ENCODE measurements at regions of chr1 and their contacts with region 1.

Region 1: GRCh38 chr1:23184212-23184934 is 15.7 kb upstream of the LUZP1 start:
- DNase-seq: peak in 4 of 5 donors; percentile 53 to 75 (median 62)
- H3K4me3 ChIP-seq: peak overlapping the region in 2 of 3 donors; percentile 40 to 66
- H3K27ac ChIP-seq: no peak overlapping the region
- H3K4me1 ChIP-seq: peaks cover 0 to 3% (median 0%) of the 10 kb centered on the region in 3 donors
- H3K27me3 ChIP-seq: no peaks in the 10 kb centered on the region
- CTCF ChIP-seq: peak; percentile 77

Region 2: DNA sequence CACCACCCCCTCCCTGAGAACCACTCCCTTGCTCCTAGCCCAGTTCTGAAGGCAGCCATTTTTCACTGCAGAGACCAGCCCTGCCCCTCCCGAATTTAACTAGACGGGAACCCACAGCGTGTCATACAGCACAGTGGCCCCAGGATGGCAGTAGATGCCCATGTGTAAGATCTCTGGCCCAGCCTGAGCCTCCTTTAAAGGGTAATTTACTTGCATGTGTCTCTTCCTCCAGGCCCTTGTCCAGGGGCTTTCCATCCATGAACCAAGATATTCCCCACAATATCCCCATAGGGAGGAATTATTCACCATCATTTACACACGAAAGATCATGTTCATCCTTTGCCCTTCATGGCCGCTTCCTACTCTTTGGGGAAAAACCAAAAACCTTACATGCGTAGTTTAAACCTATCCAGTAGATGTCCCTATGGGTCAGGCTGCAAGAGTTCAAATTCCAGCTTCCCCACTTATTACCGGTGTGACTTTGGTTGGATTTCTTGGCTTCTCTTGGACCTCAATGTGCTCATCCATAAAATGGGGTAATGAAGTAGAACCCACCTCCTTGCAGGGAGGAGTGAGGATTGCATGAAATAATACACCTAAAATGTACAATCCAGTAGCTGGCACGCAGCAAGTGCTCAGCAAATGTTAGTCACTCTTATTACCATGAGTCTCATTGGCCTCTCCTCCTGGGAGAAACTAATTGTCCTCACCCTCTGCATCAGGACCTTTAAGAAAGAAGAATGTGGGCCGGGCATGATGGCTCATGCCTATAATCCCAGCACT is 207.7 kb before region 1 on chr1:
- intact Hi-C with region 1: loop called (anchors 10 kb)
- DNase-seq: peak; percentile 70 to 87 (median 81)
- H3K4me3 ChIP-seq: no peak overlapping the region
- H3K27ac ChIP-seq: no peak overlapping the region
- H3K4me1 ChIP-seq: no peaks in the 10 kb centered on the region
- H3K27me3 ChIP-seq: no peaks in the 10 kb centered on the region
- CTCF ChIP-seq: peak; percentile 77

Region 3: GRCh38 chr1:23098463-23099170 is 85.8 kb before region 1 on chr1:
- intact Hi-C with region 1: loop called (anchors 5 kb)
- DNase-seq: peak in 4 of 5 donors; percentile 61 to 86 (median 71)
- H3K4me3 ChIP-seq: no peak overlapping the region
- H3K27ac ChIP-seq: no peak overlapping the region
- H3K4me1 ChIP-seq: peaks cover 0 to 13% (median 3%) of the 10 kb centered on the region in 3 donors
- H3K27me3 ChIP-seq: no peaks in the 10 kb centered on the region
- CTCF ChIP-seq: peak; percentile 94

Region 4: DNA sequence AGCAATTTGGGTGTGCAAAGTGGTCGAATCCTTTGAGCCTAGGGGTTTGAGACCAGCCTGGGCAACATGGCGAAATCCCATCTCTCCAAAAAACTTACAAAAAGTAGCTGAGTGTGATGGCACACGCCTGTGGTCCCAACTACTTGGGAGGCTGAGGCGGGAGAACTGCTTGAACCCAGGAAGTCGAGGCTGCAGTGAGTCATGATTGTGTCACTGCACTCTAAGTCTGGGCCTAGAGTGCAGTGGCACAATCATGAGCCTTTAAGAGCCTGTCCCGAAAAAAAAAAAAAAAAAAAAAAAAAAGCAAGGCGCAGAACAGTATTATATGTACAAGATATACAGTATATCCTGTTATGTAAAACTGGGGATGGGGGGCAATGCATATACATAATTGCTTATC is 58.0 kb after region 1 on chr1:
- intact Hi-C with region 1: no loop called
- DNase-seq: no peak
- H3K4me3 ChIP-seq: no peak overlapping the region
- H3K27ac ChIP-seq: no peak overlapping the region
- H3K4me1 ChIP-seq: no peaks in the 10 kb centered on the region
- H3K27me3 ChIP-seq: no peaks in the 10 kb centered on the region
- CTCF ChIP-seq: no peak

Region 5: DNA sequence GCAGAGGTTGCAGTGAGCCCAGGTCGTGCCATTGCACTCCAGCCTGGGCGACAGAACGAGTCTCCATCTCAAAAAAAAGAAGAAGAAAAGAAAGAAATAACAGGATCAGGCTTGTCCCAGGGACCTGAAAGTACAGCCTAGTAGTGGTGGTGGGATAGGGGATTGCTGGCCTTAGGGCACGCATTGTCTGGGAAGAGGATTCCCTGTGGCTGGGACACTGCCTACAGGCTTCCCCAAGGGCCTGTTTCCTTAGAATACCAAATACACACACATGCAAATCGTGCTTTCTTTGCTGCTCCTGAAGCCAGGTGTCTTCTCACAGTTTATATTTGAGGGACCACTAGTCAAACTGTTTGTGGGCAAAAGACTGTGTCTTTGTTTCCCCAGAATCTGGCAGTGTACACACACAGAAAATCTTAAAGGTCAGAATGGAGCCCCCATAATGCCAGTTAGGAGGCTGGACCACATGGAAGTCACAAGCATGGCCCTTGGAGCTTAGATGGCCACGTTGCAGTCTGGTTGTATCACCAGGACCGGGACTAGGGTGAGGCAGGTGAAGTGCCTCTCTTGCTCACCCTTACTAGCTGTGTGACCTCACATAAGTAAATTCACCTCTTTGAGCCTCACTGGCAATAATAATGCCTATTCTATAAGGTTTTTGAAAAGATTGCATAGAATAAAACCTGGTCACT is 312.3 kb after region 1 on chr1:
- intact Hi-C with region 1: no loop called
- DNase-seq: no peak
- H3K4me3 ChIP-seq: no peak overlapping the region
- H3K27ac ChIP-seq: no peak overlapping the region
- H3K4me1 ChIP-seq: no peaks in the 10 kb centered on the region
- H3K27me3 ChIP-seq: no peaks in the 10 kb centered on the region
- CTCF ChIP-seq: no peak

Measured in kidney (tissue), 22 donors.